T-cell (primary cell): ENCODE measurements at regions of chr2 and their contacts with region 1.

Region 1: GRCh38 chr2:208025037-208025813 is at the start of gene PLEKHM3:
- DNase-seq: peak; percentile 29 to 80 (median 56)
- ATAC-seq: peak; percentile 76 to 89 (median 81)
- H3K4me3 ChIP-seq: peak within 1 kb of the TSS; percentile 70 to 91
- H3K4me3 Mint-ChIP-seq: peak within 1 kb of the TSS; percentile 92 to 93 (median 93)
- H3K27ac ChIP-seq: peak within 1 kb of the TSS; percentile 76
- H3K27ac Mint-ChIP-seq: peak within 1 kb of the TSS; percentile 74 to 98
- H3K4me1 ChIP-seq: peaks cover 2 to 11% of the 10 kb centered on the region in 2 experiments
- H3K4me1 Mint-ChIP-seq: peaks cover 28 to 47% (median 31%) of the 10 kb centered on the region in 3 donors
- H3K27me3 ChIP-seq: no peaks in the 10 kb centered on the region
- H3K27me3 Mint-ChIP-seq: no peaks in the 10 kb centered on the region
- total RNA-seq, gene PLEKHM3: 12.3 to 18.1 (median 13.9) TPM

Region 2: DNA sequence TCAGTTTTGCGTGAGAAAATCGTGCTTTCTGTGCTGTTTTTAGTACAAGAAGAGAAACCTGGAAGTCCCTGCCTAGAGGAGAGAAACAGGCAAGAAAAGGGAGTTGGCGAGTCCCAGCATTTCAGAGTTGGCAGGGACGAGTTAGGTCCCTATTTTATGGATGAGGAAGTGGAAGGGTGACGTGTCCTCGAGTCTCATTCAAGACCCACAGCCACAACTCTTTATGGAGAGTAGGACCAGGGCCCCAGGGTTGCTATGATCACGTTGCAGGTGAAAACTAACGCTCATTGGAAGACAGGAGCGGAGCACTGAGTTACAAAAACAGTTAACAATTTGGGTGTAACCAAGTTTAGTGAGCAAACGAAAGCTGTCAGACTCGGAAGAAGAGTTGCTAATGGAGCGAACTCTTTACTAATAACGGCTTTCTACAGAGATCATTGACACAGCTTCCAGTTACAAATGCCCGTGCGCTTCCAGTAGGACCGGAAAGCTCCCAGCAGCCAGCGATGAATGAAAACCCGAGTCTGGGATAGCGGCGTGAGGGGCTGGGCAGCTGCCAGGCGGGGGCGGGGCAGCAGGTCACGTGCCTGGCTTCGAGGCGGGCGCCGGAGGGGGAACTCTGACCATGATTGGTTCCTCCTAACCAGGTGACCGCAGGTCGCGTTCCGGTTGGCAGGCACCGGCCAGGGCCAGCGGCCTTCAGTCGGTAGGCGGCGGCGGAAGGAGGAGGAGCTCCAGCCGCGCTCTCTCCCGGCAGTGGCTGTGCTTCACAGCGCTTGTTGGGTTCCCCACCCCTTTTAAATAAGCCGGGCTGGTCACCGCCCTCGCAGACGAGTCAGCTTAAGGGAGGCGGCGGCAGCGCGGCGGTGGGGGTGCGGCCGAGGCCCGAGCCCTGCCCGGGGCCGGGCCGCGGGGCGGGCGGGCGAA is 314.1 kb before region 1 on chr2 and contains the start of gene CCNYL1:
- CTCF ChIA-PET with region 1: interaction called in 1 of 2 experiments, 11 read pairs
- POLR2A ChIA-PET with region 1: no interaction called
- DNase-seq: peak; percentile 90 to 99 (median 98)
- ATAC-seq: peak; percentile 95 to 98 (median 96)
- H3K4me3 ChIP-seq: peak within 1 kb of the TSS; percentile 84
- H3K4me3 Mint-ChIP-seq: peak within 1 kb of the TSS; percentile 95 to 99 (median 96)
- H3K27ac ChIP-seq: peak within 1 kb of the TSS; percentile 65
- H3K27ac Mint-ChIP-seq: peak within 1 kb of the TSS; percentile 77 to 86
- H3K4me1 ChIP-seq: peaks cover 8 to 17% of the 10 kb centered on the region in 2 experiments
- H3K4me1 Mint-ChIP-seq: peaks cover 26 to 34% (median 28%) of the 10 kb centered on the region in 3 donors
- H3K27me3 ChIP-seq: peaks cover 0 to 6% of the 10 kb centered on the region in 2 experiments
- H3K27me3 Mint-ChIP-seq: no peaks in the 10 kb centered on the region
- total RNA-seq, gene CCNYL1: 9.0 to 13.6 (median 11.0) TPM